Gastrocnemius medialis (tissue), 4 donors: ENCODE measurements at regions of chr4 and their contacts with region 1.

Region 1: DNA sequence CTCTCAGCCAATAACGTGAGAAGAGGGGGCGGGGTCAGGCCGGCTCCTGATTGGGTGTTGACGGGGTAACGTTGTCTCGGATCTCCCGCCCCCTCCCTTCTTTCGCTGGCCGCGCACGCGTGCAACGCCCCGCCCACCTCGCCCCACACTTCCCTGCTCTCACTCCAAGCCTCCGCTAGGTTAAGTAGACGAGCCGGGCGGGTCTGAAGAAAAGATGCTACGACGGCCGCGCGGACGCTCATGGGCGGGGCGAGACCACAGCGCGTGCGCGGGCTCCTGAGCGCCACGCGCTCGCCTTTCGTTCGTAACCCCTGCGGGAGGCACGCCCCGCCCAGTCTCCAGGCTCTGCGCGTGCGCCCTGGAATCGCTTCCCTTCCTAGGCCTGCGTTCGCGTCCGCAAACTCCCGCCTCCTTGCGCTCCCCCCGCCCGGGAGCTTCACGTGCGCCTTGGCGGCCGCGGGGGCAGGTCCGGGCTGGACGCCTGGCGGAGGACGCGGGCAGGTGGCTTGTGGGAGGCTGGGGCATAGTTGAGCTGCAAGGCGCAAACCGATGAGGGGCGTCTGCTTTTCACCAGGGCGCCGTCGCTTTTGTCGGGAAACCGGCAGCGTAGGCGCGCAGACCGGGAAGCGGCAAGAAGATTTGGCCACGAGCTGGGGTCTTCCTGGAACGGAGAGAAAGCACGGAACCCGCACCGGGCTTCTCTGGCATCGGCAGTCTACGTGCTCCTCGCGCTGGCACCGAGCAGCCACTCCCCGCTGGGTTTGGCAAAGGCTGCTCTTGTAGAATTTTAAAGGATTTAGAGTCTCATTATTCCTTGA is 467 bp upstream of the PGRMC2 start:
- DNase-seq: peak; percentile 98 to 99
- ATAC-seq: peak; percentile 86 to 89
- H3K4me3 ChIP-seq: peak overlapping the region; percentile 81 to 98 (median 92)
- H3K27ac ChIP-seq: peak overlapping the region; percentile 90 to 100 (median 96)
- H3K4me1 ChIP-seq: peaks cover 28 to 30% of the 10 kb centered on the region in 2 donors
- H3K27me3 ChIP-seq: no peaks in the 10 kb centered on the region
- CTCF ChIP-seq: peak; percentile 46 to 61 (median 56)
- POLR2A ChIP-seq: peak; percentile 71 to 83

Region 2: GRCh38 chr4:128060699-128061565 is 227.1 kb before region 1 on chr4 and contains the start of gene LARP1B:
- in situ Hi-C with region 1: no loop called
- intact Hi-C with region 1: loop called (anchors 5 kb)
- DNase-seq: peak; percentile 94
- ATAC-seq: peak; percentile 88 to 91
- H3K4me3 ChIP-seq: peak within 1 kb of the TSS; percentile 55 to 95 (median 65)
- H3K27ac ChIP-seq: peak within 1 kb of the TSS; percentile 92 to 99 (median 94)
- H3K4me1 ChIP-seq: peaks cover 10 to 12% of the 10 kb centered on the region in 2 donors
- H3K27me3 ChIP-seq: no peaks in the 10 kb centered on the region
- CTCF ChIP-seq: peak in 1 of 5 experiments; percentile 9
- POLR2A ChIP-seq: peak; percentile 92 to 94
- total RNA-seq, gene LARP1B: 19.5 to 23.5 (median 22.8) TPM

Region 3: GRCh38 chr4:128371001-128371777 is 83.1 kb after region 1 on chr4:
- in situ Hi-C with region 1: no loop called
- intact Hi-C with region 1: loop called (anchors 5 kb)
- DNase-seq: peak in 1 of 2 donors; percentile 61
- ATAC-seq: peak; percentile 93 to 95
- H3K4me3 ChIP-seq: no peak overlapping the region
- H3K27ac ChIP-seq: peak overlapping the region; percentile 83 to 87 (median 86)
- H3K4me1 ChIP-seq: peaks cover 26% of the 10 kb centered on the region in 2 donors
- H3K27me3 ChIP-seq: no peaks in the 10 kb centered on the region
- CTCF ChIP-seq: no peak
- POLR2A ChIP-seq: no peak

Region 4: DNA sequence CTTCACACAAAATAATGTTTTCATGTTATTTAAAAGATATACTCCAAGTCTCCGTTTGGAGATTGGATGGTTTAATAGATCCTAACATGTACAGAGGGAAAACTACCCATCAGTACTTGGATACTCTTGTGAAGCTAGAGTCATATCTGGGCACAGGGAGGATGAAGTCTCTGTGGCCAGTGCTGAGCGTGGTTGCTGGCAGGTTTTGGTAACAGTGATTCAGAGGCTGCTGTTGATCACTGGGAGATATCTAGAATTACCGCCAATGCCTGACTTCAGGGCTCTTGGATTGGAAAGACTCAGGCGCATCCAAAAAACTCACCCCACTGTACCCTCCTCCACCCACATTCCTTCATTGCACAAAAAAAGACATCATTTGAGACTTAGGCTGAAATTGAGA is 106.7 kb after region 1 on chr4:
- in situ Hi-C with region 1: no loop called
- intact Hi-C with region 1: loop called (anchors 2 kb)
- DNase-seq: peak; percentile 76 to 77
- ATAC-seq: peak; percentile 97 to 99
- H3K4me3 ChIP-seq: no peak overlapping the region
- H3K27ac ChIP-seq: peak overlapping the region; percentile 64 to 82 (median 74)
- H3K4me1 ChIP-seq: peaks cover 18 to 38% of the 10 kb centered on the region in 2 donors
- H3K27me3 ChIP-seq: no peaks in the 10 kb centered on the region
- CTCF ChIP-seq: no peak
- POLR2A ChIP-seq: no peak

Region 5: DNA sequence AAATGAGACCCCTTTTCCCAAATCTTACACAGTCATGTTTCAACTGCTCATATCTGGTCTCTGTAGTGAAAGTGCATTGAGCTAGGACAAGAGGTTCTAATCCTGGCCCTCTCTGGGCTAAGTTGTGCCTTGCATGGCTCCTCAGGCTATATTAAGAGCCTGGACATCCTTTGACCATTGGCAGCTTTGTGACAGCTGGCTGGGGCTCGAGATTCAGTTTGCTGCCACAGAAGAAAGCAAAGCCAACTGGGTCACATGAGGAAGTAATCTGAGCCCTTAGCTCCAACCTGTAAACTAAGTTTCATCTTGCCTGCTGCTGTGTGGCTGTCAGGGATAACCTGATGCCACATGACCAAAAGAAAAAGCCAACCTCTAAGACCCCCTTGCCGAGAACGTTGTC is 469.6 kb after region 1 on chr4:
- in situ Hi-C with region 1: no loop called
- intact Hi-C with region 1: loop called (anchors 5 kb)
- DNase-seq: peak; percentile 87 to 91
- ATAC-seq: peak; percentile 100
- H3K4me3 ChIP-seq: no peak overlapping the region
- H3K27ac ChIP-seq: peak overlapping the region; percentile 78 to 86 (median 81)
- H3K4me1 ChIP-seq: peaks cover 11 to 20% of the 10 kb centered on the region in 2 donors
- H3K27me3 ChIP-seq: no peaks in the 10 kb centered on the region
- CTCF ChIP-seq: peak in 2 of 5 experiments; percentile 24 to 31
- POLR2A ChIP-seq: peak; percentile 44 to 77